AG04450 (cell line): ENCODE measurements at regions of chr22 and their contacts with region 1.

Region 1: GRCh38 chr22:37658133-37659065 is at the start of gene PDXP:
- DNase-seq: peak; percentile 100
- H3K4me3 ChIP-seq: peak within 1 kb of the TSS; percentile 78
- H3K27ac ChIP-seq: peak within 1 kb of the TSS; percentile 85
- H3K27me3 ChIP-seq: no peaks in the 10 kb centered on the region
- CTCF ChIP-seq: no peak
- polyA plus RNA-seq, gene PDXP: 11.7 and 17.7 TPM in 2 replicates

Region 2: DNA sequence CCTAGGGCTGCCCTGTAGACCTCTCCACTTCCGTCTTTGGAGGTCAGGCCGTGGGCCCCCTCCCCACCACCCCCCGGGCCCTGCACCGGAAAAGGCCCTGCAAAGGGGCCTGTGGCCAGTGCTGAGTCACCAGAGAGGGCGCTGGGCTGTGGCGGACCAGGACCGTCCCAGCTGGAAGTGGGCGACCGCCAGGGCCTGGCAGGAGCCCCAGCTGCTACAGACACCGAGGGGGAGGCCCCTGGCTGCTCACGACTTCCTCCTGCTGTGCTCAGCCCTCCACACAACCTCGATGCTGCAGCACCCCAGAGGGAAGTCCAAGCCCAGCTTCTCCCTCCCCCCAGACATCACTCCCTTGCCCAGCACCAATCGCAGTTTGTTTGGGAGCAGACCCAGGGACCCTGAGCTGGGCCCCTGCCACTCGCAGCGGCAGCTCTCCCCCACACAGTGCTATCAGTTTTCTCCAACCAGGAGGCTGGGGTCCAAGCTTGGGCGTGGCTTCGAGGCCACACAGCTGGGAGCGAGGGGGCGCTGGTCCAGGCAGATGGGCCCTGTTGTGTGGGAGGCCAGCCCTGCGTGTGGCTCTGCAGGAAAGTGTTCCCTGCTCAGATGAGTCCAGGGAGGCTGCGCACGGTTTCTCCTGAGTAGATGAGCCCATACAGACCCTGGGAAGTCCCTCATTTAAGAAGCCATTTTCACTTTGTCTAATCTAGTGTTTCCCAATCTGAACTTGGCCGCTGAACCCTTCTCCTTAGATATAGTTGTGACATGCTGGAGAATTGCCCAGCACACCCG is 24.6 kb before region 1 on chr22:
- CTCF ChIA-PET with region 1: interaction called, 3 read pairs
- POLR2A ChIA-PET with region 1: interaction called, 10 read pairs
- DNase-seq: peak; percentile 84
- H3K4me3 ChIP-seq: peak overlapping the region; percentile 29
- H3K27ac ChIP-seq: peak overlapping the region; percentile 91
- H3K27me3 ChIP-seq: no peaks in the 10 kb centered on the region
- CTCF ChIP-seq: peak; percentile 23

Region 3: DNA sequence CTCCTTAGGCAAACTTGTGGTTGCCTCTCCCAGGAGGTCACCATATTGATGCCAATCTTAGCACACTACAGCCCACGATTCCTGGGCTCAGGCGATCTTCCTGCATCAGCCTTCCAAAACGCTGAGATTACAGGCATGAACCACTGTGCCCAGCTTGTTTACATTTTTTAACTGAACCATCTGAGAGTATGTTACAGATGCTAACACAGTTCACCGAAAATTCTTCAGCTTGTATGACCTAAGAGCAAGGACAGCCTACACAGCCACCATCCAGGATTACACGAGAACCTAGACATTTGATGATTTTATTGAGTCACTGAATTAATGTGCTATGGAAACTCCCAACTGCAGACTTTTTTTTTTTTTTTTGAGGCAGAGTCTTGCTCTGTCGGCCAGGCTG is 11.2 kb after region 1 on chr22:
- CTCF ChIA-PET with region 1: interaction called, 3 read pairs
- POLR2A ChIA-PET with region 1: interaction called, 52 read pairs
- DNase-seq: no peak
- H3K4me3 ChIP-seq: no peak overlapping the region
- H3K27ac ChIP-seq: peak overlapping the region; percentile 70
- H3K27me3 ChIP-seq: no peaks in the 10 kb centered on the region
- CTCF ChIP-seq: no peak

Region 4: DNA sequence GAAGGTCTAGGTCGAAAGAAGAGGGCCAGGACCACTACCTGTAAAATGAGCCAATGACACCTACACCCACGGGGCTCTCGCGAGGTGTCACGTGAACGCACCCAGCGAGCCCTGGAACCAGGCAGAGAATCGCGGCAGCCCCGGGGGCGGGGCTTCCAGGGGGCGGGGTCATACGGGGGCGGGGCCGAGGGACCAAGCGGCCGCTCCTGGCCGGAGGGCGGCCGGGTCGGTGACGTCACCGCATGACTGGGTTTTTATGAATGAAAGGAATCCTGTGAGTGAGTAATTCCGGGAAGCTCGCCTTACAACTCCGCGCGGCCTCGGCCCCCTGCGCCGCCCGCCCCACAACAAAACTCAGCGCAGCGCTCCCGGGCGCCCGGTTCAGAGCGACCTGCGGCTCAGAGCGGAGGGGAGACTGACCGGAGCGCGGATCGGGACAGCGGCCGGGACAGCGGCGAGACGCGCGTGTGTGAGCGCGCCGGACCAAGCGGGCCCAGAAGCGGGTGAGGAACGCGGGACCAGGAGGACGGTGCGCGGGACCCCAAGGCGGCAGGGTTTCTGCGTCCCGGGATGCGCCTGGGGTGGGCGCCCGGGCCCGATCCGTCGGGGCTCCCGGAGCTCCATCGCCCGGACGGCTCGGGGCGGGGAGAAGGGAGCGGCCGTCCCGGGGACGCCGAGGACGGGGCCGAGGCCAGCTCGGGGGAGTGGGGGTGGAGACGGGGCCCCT is 543.5 kb after region 1 on chr22 and contains the start of gene MAFF:
- CTCF ChIA-PET with region 1: no interaction called
- POLR2A ChIA-PET with region 1: no interaction called
- DNase-seq: peak; percentile 93
- H3K4me3 ChIP-seq: peak within 1 kb of the TSS; percentile 88
- H3K27ac ChIP-seq: peak within 1 kb of the TSS; percentile 95
- H3K27me3 ChIP-seq: no peaks in the 10 kb centered on the region
- CTCF ChIP-seq: no peak
- polyA plus RNA-seq, gene MAFF: 8.3 and 12.2 TPM in 2 replicates